ENCODE measurements at regions of chr7 and their contacts with region 1.

Region 1: DNA sequence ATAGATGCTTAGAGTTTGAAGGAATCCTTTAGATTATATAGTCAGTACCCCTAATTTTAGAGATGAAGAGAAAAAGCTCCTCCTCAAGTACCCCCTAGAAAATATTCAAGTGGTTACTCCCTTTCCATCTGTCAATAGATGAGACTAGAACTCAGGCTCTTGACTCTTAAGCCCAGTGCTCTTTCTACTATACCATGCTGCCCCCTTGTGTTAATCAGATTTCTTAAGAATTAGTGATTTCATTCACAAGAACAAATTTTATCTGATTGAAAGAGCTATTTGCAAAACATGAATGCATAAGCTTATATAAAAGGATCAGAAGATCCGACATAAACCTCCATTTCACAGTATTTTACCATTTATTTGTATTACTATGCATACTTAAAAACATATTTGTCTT is 179.3 kb downstream of the TFEC start:
- DNase-seq: peak; percentile 73
- ATAC-seq: peak; percentile 59; the same call in 1 of the 2 replicates
- H3K4me3 ChIP-seq: no peak overlapping the region
- H3K27ac ChIP-seq: no peak overlapping the region
- H3K4me1 ChIP-seq: no peaks in the 10 kb centered on the region
- H3K27me3 ChIP-seq: no peaks in the 10 kb centered on the region
- CTCF ChIP-seq: peak; percentile 65
- POLR2A ChIP-seq: no peak
- RAD21 ChIP-seq: peak; percentile 79

Region 2: GRCh38 chr7:114026486-114027089 is 1824.7 kb before region 1 on chr7:
- CTCF ChIA-PET with region 1: interaction called, 4 read pairs
- POLR2A ChIA-PET with region 1: no interaction called
- dilution Hi-C with region 1: no loop called
- in situ Hi-C with region 1: no loop called
- intact Hi-C with region 1: loop called (anchors 1 kb)
- DNase-seq: peak; percentile 52
- ATAC-seq: no peak
- H3K4me3 ChIP-seq: no peak overlapping the region
- H3K27ac ChIP-seq: no peak overlapping the region
- H3K4me1 ChIP-seq: no peaks in the 10 kb centered on the region
- H3K27me3 ChIP-seq: no peaks in the 10 kb centered on the region
- CTCF ChIP-seq: peak; percentile 67
- POLR2A ChIP-seq: no peak
- RAD21 ChIP-seq: peak; percentile 66

Region 3: GRCh38 chr7:114426382-114427223 is 1424.7 kb before region 1 on chr7:
- CTCF ChIA-PET with region 1: interaction called, 9 read pairs
- POLR2A ChIA-PET with region 1: no interaction called
- dilution Hi-C with region 1: no loop called
- in situ Hi-C with region 1: no loop called
- intact Hi-C with region 1: loop called (anchors 5 kb)
- DNase-seq: peak; percentile 36
- ATAC-seq: peak; percentile 53; the same call in 1 of the 2 replicates
- H3K4me3 ChIP-seq: no peak overlapping the region
- H3K27ac ChIP-seq: no peak overlapping the region
- H3K4me1 ChIP-seq: no peaks in the 10 kb centered on the region
- H3K27me3 ChIP-seq: no peaks in the 10 kb centered on the region
- CTCF ChIP-seq: peak; percentile 43
- POLR2A ChIP-seq: no peak
- RAD21 ChIP-seq: peak; percentile 35; the same call in 1 of the 2 replicates

Region 4: DNA sequence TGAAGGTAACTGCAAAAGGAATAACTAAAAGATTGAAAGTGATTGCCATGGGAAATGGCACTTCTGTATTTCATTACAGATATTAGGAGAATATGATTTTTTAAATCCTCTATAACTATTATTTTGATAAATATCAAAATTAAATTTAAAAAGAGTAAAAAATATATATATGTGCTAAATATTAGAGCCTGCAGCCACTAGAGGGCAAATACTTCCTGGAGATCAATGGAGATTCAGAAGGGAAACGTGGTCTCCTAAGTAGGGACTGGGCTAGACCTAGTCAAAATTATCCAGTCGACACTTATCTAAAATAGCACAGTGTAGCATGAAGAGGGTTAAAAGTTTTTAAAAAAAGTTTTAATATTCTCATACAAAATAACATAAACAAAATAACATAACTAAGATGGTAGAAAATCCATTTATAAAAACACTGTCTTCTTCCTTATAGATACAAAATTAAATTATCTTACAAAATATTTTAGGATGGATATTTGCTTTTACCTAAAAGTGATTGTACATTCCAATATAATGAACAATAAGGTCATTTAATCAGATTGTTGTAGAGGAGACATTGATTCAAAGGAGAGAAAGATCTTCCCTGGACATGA is 495.0 kb before region 1 on chr7:
- CTCF ChIA-PET with region 1: no interaction called
- POLR2A ChIA-PET with region 1: no interaction called
- dilution Hi-C with region 1: no loop called
- in situ Hi-C with region 1: no loop called
- intact Hi-C with region 1: loop called (anchors 5 kb)
- DNase-seq: peak; percentile 44
- ATAC-seq: no peak
- H3K4me3 ChIP-seq: no peak overlapping the region
- H3K27ac ChIP-seq: no peak overlapping the region
- H3K4me1 ChIP-seq: peaks cover 4% of the 10 kb centered on the region; the same call in 1 of the 2 replicates
- H3K27me3 ChIP-seq: no peaks in the 10 kb centered on the region
- CTCF ChIP-seq: peak; percentile 48
- POLR2A ChIP-seq: no peak
- RAD21 ChIP-seq: peak; percentile 42

Region 5: DNA sequence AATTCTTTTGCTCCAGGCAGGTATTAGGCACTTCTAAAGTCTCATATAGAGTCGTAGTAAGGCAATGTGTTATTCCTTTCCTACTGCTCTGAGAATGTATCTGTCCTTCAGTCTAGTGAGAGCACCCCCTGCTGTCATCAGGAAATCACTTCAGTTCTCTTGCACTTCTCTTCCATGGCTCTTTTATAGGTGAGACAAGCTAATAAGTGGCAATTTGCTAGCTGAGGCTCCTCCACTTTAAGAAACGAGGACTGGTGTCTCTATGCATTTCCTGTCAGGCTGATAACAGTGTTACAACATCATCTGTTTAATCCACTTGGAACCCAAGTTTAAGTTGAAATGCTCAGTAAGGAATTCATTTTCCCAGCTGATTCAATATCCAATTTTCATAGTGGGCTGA is 171.3 kb before region 1 on chr7:
- CTCF ChIA-PET with region 1: interaction called, 10 read pairs
- POLR2A ChIA-PET with region 1: no interaction called
- dilution Hi-C with region 1: no loop called
- in situ Hi-C with region 1: no loop called
- intact Hi-C with region 1: no loop called
- DNase-seq: peak; percentile 59
- ATAC-seq: peak; percentile 61; the same call in 1 of the 2 replicates
- H3K4me3 ChIP-seq: no peak overlapping the region
- H3K27ac ChIP-seq: no peak overlapping the region
- H3K4me1 ChIP-seq: no peaks in the 10 kb centered on the region
- H3K27me3 ChIP-seq: no peaks in the 10 kb centered on the region
- CTCF ChIP-seq: peak; percentile 53
- POLR2A ChIP-seq: no peak
- RAD21 ChIP-seq: peak; percentile 58

Region 6: DNA sequence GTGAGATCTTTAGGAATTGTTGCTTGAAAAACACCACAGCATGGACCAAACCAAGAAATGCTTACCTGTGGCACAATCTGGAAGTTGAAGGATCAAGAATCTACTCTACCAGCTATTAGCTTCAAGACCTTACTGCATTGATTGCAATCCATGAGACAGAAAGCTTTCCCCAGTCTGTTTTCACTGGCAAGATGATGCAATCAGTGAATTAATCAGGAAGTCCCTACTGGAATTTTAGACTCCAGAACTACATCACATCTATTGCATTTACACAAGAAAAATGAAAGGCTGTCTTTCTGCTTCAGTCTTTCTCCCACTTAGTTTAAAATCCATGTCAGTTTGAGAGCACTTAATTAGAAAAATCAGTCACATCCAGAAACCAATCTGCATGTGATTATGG is 12.5 kb before region 1 on chr7:
- CTCF ChIA-PET with region 1: no interaction called
- POLR2A ChIA-PET with region 1: no interaction called
- dilution Hi-C with region 1: no loop called
- in situ Hi-C with region 1: no loop called
- intact Hi-C with region 1: no loop called
- DNase-seq: peak; percentile 50
- ATAC-seq: no peak
- H3K4me3 ChIP-seq: no peak overlapping the region
- H3K27ac ChIP-seq: no peak overlapping the region
- H3K4me1 ChIP-seq: no peaks in the 10 kb centered on the region
- H3K27me3 ChIP-seq: no peaks in the 10 kb centered on the region
- CTCF ChIP-seq: no peak
- POLR2A ChIP-seq: no peak
- RAD21 ChIP-seq: no peak

Region 7: DNA sequence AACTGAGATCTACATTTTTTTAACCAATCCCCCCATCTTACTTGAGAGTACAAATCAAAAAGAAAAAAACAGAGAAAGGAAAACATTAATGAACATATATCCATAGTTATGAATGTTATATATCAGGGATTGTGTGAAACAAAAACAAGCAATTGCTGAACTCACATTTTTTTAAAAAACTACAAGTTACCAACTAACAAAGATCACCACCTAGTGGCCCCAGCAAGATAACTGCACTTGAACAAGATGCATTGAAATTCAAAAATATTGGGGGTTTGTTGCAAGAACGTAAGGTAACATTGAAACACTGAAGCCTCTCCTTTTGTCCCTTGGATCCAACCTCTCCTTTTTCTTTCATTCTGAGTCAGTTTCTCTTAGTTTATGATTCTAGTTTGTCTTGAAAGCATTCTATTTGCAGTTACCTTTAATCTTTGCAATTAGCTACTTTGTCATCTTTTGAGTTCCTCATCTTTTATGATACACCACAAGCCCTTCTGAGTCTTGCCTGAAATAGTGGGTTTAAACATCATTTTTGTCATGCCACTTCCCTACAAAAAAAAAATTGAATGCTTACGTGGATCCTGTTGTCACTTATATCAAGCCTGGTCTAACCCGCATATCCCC is 271.8 kb after region 1 on chr7:
- CTCF ChIA-PET with region 1: interaction called, 6 read pairs
- POLR2A ChIA-PET with region 1: no interaction called
- dilution Hi-C with region 1: no loop called
- in situ Hi-C with region 1: no loop called
- intact Hi-C with region 1: loop called (anchors 1 kb)
- DNase-seq: peak; percentile 66
- ATAC-seq: peak; percentile 53; the same call in 1 of the 2 replicates
- H3K4me3 ChIP-seq: no peak overlapping the region
- H3K27ac ChIP-seq: no peak overlapping the region
- H3K4me1 ChIP-seq: peaks cover 3% of the 10 kb centered on the region
- H3K27me3 ChIP-seq: no peaks in the 10 kb centered on the region
- CTCF ChIP-seq: peak; percentile 81
- POLR2A ChIP-seq: no peak
- RAD21 ChIP-seq: peak; percentile 69